AG04449 (cell line): ENCODE measurements at regions of chr15 and their contacts with region 1.

Region 1: DNA sequence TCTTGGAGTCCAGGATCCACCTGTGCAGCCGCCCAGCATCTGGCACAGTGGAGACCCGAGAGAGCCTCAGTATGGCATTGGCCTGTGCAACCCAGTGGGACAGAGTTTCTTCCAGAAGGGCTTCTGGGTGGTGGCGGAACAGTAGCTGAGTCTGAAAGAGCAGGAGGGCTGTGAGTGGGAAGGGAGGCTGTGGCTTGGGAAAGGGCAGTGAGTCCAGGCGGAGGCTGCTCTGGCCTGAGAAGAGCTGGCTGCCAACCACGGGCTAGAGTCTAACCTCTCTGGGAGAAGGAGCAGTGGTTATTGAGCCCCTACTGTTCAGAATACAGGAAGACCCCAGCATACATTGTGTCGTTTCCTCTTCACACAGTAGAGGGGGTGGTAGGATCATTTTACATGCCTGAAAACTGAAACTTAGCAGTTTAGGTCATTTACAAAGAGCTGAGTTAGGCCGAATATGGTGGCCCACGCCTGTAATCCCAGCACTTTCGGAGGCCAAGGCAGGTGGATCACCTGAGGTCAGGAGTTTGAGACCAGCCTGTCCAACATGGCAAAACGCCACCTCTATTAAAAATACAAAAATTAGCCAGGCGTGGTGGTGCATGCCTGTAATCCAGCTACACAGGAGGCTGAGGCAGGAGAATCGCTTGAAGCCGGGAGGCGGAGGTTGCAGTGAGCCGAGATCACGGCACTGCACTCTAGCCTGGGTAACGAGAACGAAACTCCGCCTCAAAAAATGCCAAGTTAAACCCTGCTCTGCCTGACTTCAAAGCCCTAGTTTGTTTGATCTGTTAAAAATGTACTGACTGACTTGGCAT is 3.2 kb downstream of the AEN start:
- DNase-seq: no peak
- H3K4me3 ChIP-seq: peak overlapping the region; percentile 31
- CTCF ChIP-seq: peak; percentile 43

Region 2: DNA sequence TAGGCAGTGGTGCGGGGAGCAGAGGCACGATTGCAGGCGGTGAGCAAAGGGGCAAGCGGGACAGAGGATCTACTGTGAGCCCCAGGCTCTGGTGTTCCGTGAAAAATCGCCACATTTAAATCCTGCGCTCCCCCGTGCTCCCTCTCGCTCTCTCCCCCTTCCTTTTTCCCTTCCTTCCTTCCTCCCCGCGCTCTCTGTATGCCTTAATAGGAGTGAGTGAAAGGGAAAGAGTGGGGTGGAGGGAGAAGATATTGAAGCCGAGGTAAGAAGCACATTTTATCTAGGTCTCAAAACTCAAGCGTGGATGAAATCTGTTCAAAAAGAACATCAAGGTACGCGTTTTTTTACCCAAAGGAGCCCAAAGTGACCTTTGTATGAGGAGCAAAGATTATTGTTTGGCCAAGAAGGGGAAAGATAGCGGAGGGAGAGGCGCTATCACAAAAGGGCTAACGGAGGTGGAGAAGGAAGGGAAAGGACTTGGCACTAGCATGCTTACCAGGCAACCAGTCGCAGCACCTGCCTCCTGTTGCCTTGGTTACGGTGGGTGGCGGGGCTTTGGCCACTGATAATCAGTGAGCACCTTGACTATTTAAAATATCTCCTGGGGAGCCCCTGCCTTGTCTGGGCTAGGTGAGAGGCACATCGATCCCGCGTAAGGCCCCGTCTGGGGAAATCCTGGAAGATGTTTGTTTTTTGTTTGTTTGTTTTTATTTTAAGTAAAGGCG is 18.1 kb before region 1 on chr15:
- CTCF ChIA-PET with region 1: no interaction called
- POLR2A ChIA-PET with region 1: no interaction called
- DNase-seq: no peak
- H3K4me3 ChIP-seq: no peak overlapping the region
- CTCF ChIP-seq: no peak

Region 3: GRCh38 chr15:88635318-88635717 is 11.0 kb after region 1 on chr15:
- CTCF ChIA-PET with region 1: interaction called, 27 read pairs
- POLR2A ChIA-PET with region 1: interaction called, 7 read pairs
- DNase-seq: no peak
- H3K4me3 ChIP-seq: no peak overlapping the region
- CTCF ChIP-seq: no peak

Region 4: DNA sequence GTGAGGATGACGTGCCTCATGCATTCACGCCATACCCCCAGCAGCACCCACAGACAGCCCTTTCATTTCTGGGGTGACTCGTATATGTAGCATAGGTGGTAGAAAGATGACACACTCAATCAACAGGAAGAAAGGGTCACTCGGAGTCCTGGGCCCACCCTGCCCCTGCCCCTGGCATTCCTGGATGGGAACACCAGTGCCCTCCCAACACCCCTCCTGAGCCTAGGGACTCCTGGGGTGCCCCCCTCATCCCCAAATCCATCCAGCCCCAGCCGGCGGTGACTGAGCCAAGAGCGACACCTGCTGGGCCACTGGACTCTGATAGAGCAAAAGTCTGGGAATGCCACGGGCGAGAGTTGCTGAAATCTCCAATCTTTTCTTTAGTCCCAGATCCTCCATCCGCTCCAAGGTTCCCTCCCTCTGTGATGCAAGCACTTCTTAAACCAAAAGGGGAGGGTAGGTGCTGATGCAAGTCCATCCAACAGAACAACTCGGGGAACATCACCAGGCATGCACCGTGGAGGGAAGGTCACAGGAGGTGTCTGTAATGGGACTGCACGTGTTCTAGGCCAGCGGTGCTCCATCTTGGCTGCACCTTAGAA is 209.9 kb after region 1 on chr15:
- CTCF ChIA-PET with region 1: interaction called, 22 read pairs
- POLR2A ChIA-PET with region 1: no interaction called
- DNase-seq: peak; percentile 12
- H3K4me3 ChIP-seq: no peak overlapping the region
- CTCF ChIP-seq: peak; percentile 82